Ascending aorta (tissue), 2 donors: ENCODE measurements at regions of chr15 and their contacts with region 1.

Region 1: DNA sequence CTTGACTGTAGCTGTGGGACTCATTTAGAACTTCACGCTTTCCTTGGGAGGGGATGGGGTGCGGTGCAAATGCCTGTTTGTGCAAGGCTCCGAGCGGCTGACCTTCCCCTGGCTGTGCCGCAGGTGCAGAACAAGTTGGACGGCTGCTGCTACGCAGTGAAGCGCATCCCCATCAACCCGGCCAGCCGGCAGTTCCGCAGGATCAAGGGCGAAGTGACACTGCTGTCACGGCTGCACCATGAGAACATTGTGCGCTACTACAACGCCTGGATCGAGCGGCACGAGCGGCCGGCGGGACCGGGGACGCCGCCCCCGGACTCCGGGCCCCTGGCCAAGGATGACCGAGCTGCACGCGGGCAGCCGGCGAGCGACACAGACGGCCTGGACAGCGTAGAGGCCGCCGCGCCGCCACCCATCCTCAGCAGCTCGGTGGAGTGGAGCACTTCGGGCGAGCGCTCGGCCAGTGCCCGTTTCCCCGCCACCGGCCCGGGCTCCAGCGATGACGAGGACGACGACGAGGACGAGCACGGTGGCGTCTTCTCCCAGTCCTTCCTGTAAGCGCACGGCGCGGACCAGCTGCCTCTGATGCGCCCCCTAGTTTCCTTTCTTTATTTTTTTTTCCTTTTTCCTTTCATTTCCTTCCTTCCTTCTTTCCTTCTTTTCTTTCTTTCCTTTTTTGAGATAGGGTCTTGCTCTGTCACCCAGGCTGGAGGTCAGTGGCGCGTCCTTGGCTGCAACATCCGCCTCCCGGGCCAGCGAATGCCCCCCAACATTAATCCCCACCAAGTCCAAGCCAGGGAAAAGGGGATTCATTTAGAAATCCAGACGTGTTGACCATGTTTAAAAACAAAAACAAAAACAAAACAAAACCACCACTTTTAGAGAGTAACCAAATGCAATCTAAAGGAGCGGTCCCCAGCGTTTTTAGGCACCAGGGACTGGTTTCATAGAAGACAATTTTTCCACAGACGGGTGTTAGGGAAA is 42.7 kb downstream of the EIF2AK4 start:
- DNase-seq: peak in 1 of 2 donors; percentile 72
- H3K4me3 ChIP-seq: peak overlapping the region; percentile 44 to 69
- H3K27ac ChIP-seq: peak overlapping the region; percentile 42 to 55
- H3K4me1 ChIP-seq: peaks cover 0 to 4% of the 10 kb centered on the region in 2 donors
- H3K27me3 ChIP-seq: no peaks in the 10 kb centered on the region
- CTCF ChIP-seq: peak; percentile 6 to 63 (median 33)

Region 2: DNA sequence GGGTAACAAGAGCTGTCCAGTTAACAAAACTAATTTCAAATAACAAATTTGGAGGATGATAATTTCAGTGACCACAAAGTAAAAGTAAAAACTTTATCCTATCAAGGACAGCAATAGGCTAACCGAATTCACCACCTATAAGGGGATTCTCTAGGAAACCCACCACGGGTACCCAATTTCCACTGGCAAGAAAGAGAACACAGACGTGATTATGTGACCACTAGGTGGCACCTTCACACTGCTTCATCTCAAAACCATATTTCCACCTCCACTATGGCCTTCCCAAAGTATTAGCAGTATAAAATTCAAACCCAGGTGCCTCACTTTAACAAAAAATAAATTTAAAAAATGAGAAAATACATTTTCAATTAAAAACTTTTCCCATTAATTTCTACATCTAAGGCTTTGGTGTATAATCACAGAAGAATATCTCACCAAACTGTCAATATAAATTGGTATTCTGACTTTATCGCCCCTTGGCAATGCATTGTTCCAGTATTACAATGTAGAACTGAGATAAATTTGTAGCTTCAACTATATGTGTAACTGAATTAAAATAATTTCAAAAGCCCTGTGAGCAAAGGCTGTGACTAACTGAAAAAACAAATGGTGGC is 290.5 kb before region 1 on chr15:
- intact Hi-C with region 1: loop called (anchors 2 kb)
- DNase-seq: no peak
- H3K4me3 ChIP-seq: no peak overlapping the region
- H3K27ac ChIP-seq: no peak overlapping the region
- H3K4me1 ChIP-seq: no peaks in the 10 kb centered on the region
- H3K27me3 ChIP-seq: no peaks in the 10 kb centered on the region
- CTCF ChIP-seq: peak; percentile 33 to 77 (median 66)

Region 3: GRCh38 chr15:40226736-40227135 is 250.2 kb after region 1 on chr15:
- intact Hi-C with region 1: no loop called
- DNase-seq: no peak
- H3K4me3 ChIP-seq: no peak overlapping the region
- H3K27ac ChIP-seq: no peak overlapping the region
- H3K4me1 ChIP-seq: no peaks in the 10 kb centered on the region
- H3K27me3 ChIP-seq: no peaks in the 10 kb centered on the region
- CTCF ChIP-seq: no peak